Activated T-helper 2 cell treated with anti-CD3 and anti-CD28 coated beads, Interferon-gamma antibody, Interleukin-2, Interleukin-4, amounts not matched to agents 10 μg/mL and 5 μg/mL and 100 μg/mL, durations not matched to agents 14 hours and 24 hours and 36 hours (primary cell): ENCODE measurements at regions of chr6 and their contacts with region 1.

Region 1: DNA sequence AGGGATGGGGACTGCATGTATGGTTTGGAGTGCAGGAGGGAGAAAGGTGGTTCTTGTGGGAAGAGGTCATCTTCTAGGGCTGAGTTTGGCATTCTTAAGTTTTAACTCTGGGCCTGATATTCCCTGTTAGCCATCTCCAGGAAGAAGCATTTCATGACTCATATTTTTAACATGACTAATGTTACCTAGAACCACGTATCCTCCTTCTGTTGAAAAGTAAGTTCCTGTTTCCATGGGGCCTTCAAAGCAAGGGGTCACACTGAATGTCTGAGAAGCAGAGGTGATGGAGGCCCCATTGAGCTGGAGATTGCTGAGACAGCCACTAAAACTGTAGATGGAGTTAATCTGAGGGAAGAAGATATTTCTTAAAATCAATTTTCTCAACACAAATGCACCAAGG is 30.2 kb downstream of the FAM229B start:
- DNase-seq: no peak
- H3K4me3 Mint-ChIP-seq: peak overlapping the region; percentile 41
- H3K27ac Mint-ChIP-seq: peak overlapping the region; percentile 82
- H3K4me1 Mint-ChIP-seq: peaks cover 20% of the 10 kb centered on the region
- H3K27me3 Mint-ChIP-seq: peaks cover 12% of the 10 kb centered on the region

Region 2: GRCh38 chr6:112153926-112154607 is 36.5 kb after region 1 on chr6:
- intact Hi-C with region 1: loop called (anchors 5 kb)
- DNase-seq: no peak
- H3K4me3 Mint-ChIP-seq: no peak overlapping the region
- H3K27ac Mint-ChIP-seq: peak overlapping the region; percentile 18
- H3K4me1 Mint-ChIP-seq: peaks cover 21% of the 10 kb centered on the region
- H3K27me3 Mint-ChIP-seq: peaks cover 22% of the 10 kb centered on the region